ENCODE measurements at regions of chr19 and their contacts with region 1.

Region 1: DNA sequence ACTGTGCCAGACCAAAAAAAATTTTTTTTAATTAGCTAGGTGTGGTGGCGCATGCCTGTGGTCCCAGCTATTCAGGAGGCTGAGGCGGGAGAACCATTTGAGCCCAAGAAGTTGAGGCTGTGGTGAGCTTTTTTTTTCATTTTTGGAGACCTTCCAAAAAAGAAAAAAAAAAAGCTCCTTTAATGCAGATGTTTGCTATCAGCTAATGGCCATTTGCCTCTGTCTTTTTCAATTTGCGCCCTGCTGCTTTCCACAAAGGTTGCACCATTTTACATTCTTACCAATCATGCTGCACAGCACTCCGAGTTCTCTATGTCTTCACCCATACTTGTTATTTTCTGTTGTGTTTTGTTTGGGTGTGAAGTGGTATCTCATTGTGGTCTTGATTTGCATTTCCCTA is 15.6 kb upstream of the SMARCA4 start:
- DNase-seq: no peak
- ATAC-seq: no peak
- H3K4me3 Mint-ChIP-seq: no peak overlapping the region
- H3K27ac Mint-ChIP-seq: no peak overlapping the region
- H3K4me1 Mint-ChIP-seq: peaks cover 9% of the 10 kb centered on the region
- H3K27me3 Mint-ChIP-seq: no peaks in the 10 kb centered on the region

Region 2: GRCh38 chr19:10960314-10961072 is 15.2 kb after region 1 on chr19 and contains the start of gene SMARCA4:
- CTCF ChIA-PET with region 1: interaction called, 18 read pairs
- DNase-seq: peak; percentile 98
- ATAC-seq: peak; percentile 84
- H3K4me3 Mint-ChIP-seq: peak within 1 kb of the TSS; percentile 87
- H3K27ac Mint-ChIP-seq: peak within 1 kb of the TSS; percentile 87
- H3K4me1 Mint-ChIP-seq: peaks cover 43% of the 10 kb centered on the region
- H3K27me3 Mint-ChIP-seq: no peaks in the 10 kb centered on the region
- total RNA-seq, gene SMARCA4: 107 to 114 TPM

Measured in activated CD8-positive, alpha-beta memory T cell treated with anti-CD3 and anti-CD28 coated beads, Interleukin-2, amount 10 ng/mL, durations not matched to agents 7 days and 5 days (primary cell).